K562 (cell line): ENCODE measurements at regions of chr4 and their contacts with region 1.

Region 1: GRCh38 chr4:102449751-102450352 is 51.3 kb upstream of the NFKB1 start:
- DNase-seq: peak; percentile 22 to 64 (median 32)
- ATAC-seq: peak; percentile 83
- H3K4me3 ChIP-seq: no peak overlapping the region
- H3K27ac ChIP-seq: no peak overlapping the region
- H3K4me1 ChIP-seq: peaks cover 0 to 2% of the 10 kb centered on the region in 2 experiments; a peak in 2 of 5 replicates
- H3K27me3 ChIP-seq: no peaks in the 10 kb centered on the region; a peak in 1 of 5 replicates
- CTCF ChIP-seq: peak; percentile 52 to 74 (median 52); a peak in 5 of 6 replicates
- EP300 ChIP-seq: no peak
- POLR2A ChIP-seq: no peak
- RAD21 ChIP-seq: peak; percentile 80 to 82

Region 2: GRCh38 chr4:101055392-101055791 is 1394.5 kb before region 1 on chr4:
- CTCF ChIA-PET with region 1: no interaction called
- POLR2A ChIA-PET with region 1: no interaction called
- in situ Hi-C with region 1: no loop called
- intact Hi-C with region 1: no loop called
- DNase-seq: no peak
- ATAC-seq: no peak
- H3K4me3 ChIP-seq: no peak overlapping the region
- H3K27ac ChIP-seq: no peak overlapping the region
- H3K4me1 ChIP-seq: no peaks in the 10 kb centered on the region
- H3K27me3 ChIP-seq: no peaks in the 10 kb centered on the region
- CTCF ChIP-seq: no peak
- EP300 ChIP-seq: no peak
- POLR2A ChIP-seq: no peak
- RAD21 ChIP-seq: no peak

Region 3: DNA sequence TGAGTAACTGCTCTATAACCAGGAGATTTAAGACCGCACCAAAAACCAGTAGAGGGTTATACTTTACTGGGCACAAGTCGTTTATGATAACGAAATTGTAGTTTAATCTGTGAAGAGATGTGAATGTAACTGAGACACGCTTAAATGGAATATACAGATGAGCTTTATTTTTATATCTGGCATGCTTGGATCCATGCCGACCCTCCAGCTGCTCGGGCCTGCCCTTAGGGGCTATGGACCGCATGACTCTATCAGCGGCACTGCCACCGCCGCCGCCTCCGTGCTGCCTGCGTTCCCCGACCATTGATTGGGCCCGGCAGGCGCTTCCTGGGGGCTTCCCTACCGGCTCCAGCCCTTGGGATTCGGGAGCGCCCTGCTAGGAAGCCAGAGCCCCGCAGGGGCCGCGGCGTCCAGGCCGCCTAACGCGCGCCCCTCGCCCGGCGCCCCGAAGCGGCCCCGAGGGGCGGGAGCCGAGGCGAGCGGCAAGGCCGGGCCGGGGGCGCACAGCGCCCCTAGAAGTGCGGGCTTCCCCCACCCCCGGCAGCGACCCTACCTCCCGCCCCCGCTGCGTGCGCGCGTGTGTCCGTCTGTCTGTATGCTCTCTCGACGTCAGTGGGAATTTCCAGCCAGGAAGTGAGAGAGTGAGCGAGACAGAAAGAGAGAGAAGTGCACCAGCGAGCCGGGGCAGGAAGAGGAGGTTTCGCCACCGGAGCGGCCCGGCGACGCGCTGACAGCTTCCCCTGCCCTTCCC is 51.0 kb after region 1 on chr4 and contains the start of gene NFKB1:
- CTCF ChIA-PET with region 1: interaction called, 4 read pairs
- POLR2A ChIA-PET with region 1: interaction called, 5 read pairs
- in situ Hi-C with region 1: no loop called
- intact Hi-C with region 1: loop called (anchors 5 kb)
- DNase-seq: peak in 3 of 4 experiments; percentile 37 to 44 (median 39)
- ATAC-seq: peak; percentile 23
- H3K4me3 ChIP-seq: peak within 1 kb of the TSS; percentile 81
- H3K27ac ChIP-seq: peak within 1 kb of the TSS; percentile 91
- H3K4me1 ChIP-seq: peaks cover 13 to 18% of the 10 kb centered on the region in 2 experiments; a peak in 4 of 5 replicates
- H3K27me3 ChIP-seq: no peaks in the 10 kb centered on the region
- CTCF ChIP-seq: no peak
- EP300 ChIP-seq: no peak
- POLR2A ChIP-seq: no peak
- RAD21 ChIP-seq: no peak
- polyA plus RNA-seq, gene NFKB1: 2.4 to 3.2 TPM

Region 4: GRCh38 chr4:102598086-102598761 is 148.4 kb after region 1 on chr4:
- CTCF ChIA-PET with region 1: no interaction called
- POLR2A ChIA-PET with region 1: no interaction called
- in situ Hi-C with region 1: loop called (anchors 5 kb)
- intact Hi-C with region 1: no loop called
- DNase-seq: no peak
- ATAC-seq: no peak
- H3K4me3 ChIP-seq: no peak overlapping the region
- H3K27ac ChIP-seq: no peak overlapping the region
- H3K4me1 ChIP-seq: no peaks in the 10 kb centered on the region
- H3K27me3 ChIP-seq: no peaks in the 10 kb centered on the region
- CTCF ChIP-seq: no peak
- EP300 ChIP-seq: no peak
- POLR2A ChIP-seq: no peak
- RAD21 ChIP-seq: no peak

Region 5: DNA sequence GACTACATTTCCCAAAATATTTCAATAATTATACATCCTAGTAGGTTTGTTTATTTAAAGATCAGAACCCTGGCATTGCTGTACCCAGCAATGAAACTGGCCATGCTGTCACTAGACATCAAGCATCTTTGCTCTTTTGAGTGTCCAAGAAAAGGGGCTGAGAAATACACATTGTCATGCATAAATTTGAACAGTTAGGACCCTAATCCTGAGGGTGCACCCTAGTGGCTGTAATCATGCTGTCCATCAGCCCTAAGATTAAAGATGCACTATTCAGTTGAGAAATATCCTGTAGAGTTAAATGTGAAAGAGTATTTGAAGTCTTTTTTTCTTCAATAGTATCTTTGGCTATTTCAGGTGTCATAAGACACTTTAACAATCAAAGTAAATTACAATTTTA is 160.2 kb after region 1 on chr4:
- CTCF ChIA-PET with region 1: interaction called, 3 read pairs
- POLR2A ChIA-PET with region 1: no interaction called
- in situ Hi-C with region 1: no loop called
- intact Hi-C with region 1: loop called (anchors 2 kb)
- DNase-seq: peak in 2 of 4 experiments; percentile 16
- ATAC-seq: 0 out of 3 replicates have a peak, but pooled peaks have one; percentile 55
- H3K4me3 ChIP-seq: no peak overlapping the region
- H3K27ac ChIP-seq: no peak overlapping the region
- H3K4me1 ChIP-seq: no peaks in the 10 kb centered on the region
- H3K27me3 ChIP-seq: no peaks in the 10 kb centered on the region
- CTCF ChIP-seq: peak; percentile 19 to 53 (median 38); a peak in 4 of 6 replicates
- EP300 ChIP-seq: no peak
- POLR2A ChIP-seq: no peak
- RAD21 ChIP-seq: peak; percentile 17 to 53; a peak in 2 of 4 replicates

Region 6: GRCh38 chr4:102843273-102843672 is 393.4 kb after region 1 on chr4:
- CTCF ChIA-PET with region 1: no interaction called
- POLR2A ChIA-PET with region 1: no interaction called
- in situ Hi-C with region 1: no loop called
- intact Hi-C with region 1: no loop called
- DNase-seq: no peak
- ATAC-seq: no peak
- H3K4me3 ChIP-seq: no peak overlapping the region
- H3K27ac ChIP-seq: no peak overlapping the region
- H3K4me1 ChIP-seq: no peaks in the 10 kb centered on the region
- H3K27me3 ChIP-seq: no peaks in the 10 kb centered on the region
- CTCF ChIP-seq: no peak
- EP300 ChIP-seq: no peak
- POLR2A ChIP-seq: no peak
- RAD21 ChIP-seq: no peak